ENCODE measurements at regions of chr14 and their contacts with region 1.

Region 1: DNA sequence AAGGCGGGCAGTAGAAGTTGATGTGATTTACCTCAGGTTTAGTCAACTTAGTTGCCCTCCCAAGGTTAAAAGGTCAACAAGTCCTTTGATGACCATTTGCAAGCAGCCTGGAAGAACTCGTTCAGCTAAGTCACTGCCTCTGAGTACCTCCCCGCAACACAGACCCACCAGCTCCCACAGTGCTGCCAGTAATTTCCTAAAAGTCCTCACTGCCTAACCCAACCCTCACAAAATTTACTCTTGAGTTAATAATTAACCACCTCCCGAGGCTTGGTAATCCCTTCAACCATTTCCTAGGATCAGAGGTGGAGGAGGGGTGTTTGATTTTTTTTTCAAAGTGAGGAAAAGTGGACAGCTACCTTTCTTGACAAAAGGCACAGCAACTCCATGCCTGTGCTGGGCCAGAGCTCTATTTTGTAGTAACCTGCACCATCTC is 55.8 kb downstream of the MAP3K9 start:
- DNase-seq: peak; percentile 94
- ATAC-seq: peak; percentile 97
- H3K4me3 ChIP-seq: peak overlapping the region in 2 of 3 experiments; percentile 20 to 41; a peak in 3 of 6 replicates
- H3K27ac ChIP-seq: peak overlapping the region; percentile 56
- H3K4me1 ChIP-seq: peaks cover 39% of the 10 kb centered on the region
- H3K27me3 ChIP-seq: no peaks in the 10 kb centered on the region
- CTCF ChIP-seq: no peak
- EP300 ChIP-seq: peak in 1 of 2 experiments; percentile 66; a peak in 1 of 4 replicates
- POLR2A ChIP-seq: no peak
- RAD21 ChIP-seq: no peak

Region 2: GRCh38 chr14:70816525-70816924 is 63.0 kb after region 1 on chr14:
- CTCF ChIA-PET with region 1: no interaction called
- POLR2A ChIA-PET with region 1: interaction called, 20 read pairs
- in situ Hi-C with region 1: no loop called
- intact Hi-C with region 1: loop called (anchors 2 kb)
- DNase-seq: no peak
- ATAC-seq: no peak
- H3K4me3 ChIP-seq: no peak overlapping the region
- H3K27ac ChIP-seq: no peak overlapping the region
- H3K4me1 ChIP-seq: peaks cover 28% of the 10 kb centered on the region
- H3K27me3 ChIP-seq: peaks cover 0 to 22% of the 10 kb centered on the region in 2 experiments; a peak in 2 of 5 replicates
- CTCF ChIP-seq: no peak
- EP300 ChIP-seq: no peak
- POLR2A ChIP-seq: no peak
- RAD21 ChIP-seq: no peak